Activated naive CD4-positive, alpha-beta T cell treated with anti-CD3 and anti-CD28 coated beads for 36 hours (primary cell): ENCODE measurements at regions of chr3 and their contacts with region 1.

Region 1: GRCh38 chr3:133573054-133573628 is 345 bp upstream of the CDV3 start:
- DNase-seq: peak; percentile 100
- H3K4me3 Mint-ChIP-seq: peak overlapping the region; percentile 87
- H3K27ac Mint-ChIP-seq: peak overlapping the region; percentile 100
- H3K4me1 Mint-ChIP-seq: peaks cover 43% of the 10 kb centered on the region
- H3K27me3 Mint-ChIP-seq: no peaks in the 10 kb centered on the region

Region 2: GRCh38 chr3:132543036-132543739 is 1030.0 kb before region 1 on chr3:
- CTCF ChIA-PET with region 1: no interaction called
- intact Hi-C with region 1: no loop called
- DNase-seq: no peak
- H3K4me3 Mint-ChIP-seq: no peak overlapping the region
- H3K27ac Mint-ChIP-seq: peak overlapping the region; percentile 51
- H3K4me1 Mint-ChIP-seq: peaks cover 18% of the 10 kb centered on the region
- H3K27me3 Mint-ChIP-seq: no peaks in the 10 kb centered on the region

Region 3: GRCh38 chr3:133441867-133442270 is 131.3 kb before region 1 on chr3:
- CTCF ChIA-PET with region 1: interaction called, 4 read pairs
- intact Hi-C with region 1: loop called (anchors 1 kb)
- DNase-seq: peak; percentile 47
- H3K4me3 Mint-ChIP-seq: peak overlapping the region; percentile 60
- H3K27ac Mint-ChIP-seq: peak overlapping the region; percentile 76
- H3K4me1 Mint-ChIP-seq: peaks cover 30% of the 10 kb centered on the region
- H3K27me3 Mint-ChIP-seq: no peaks in the 10 kb centered on the region

Region 4: GRCh38 chr3:133487920-133488540 is 85.1 kb before region 1 on chr3:
- CTCF ChIA-PET with region 1: interaction called, 72 read pairs
- intact Hi-C with region 1: loop called (anchors 1 kb)
- DNase-seq: peak; percentile 72
- H3K4me3 Mint-ChIP-seq: no peak overlapping the region
- H3K27ac Mint-ChIP-seq: no peak overlapping the region
- H3K4me1 Mint-ChIP-seq: peaks cover 49% of the 10 kb centered on the region
- H3K27me3 Mint-ChIP-seq: no peaks in the 10 kb centered on the region

Region 5: DNA sequence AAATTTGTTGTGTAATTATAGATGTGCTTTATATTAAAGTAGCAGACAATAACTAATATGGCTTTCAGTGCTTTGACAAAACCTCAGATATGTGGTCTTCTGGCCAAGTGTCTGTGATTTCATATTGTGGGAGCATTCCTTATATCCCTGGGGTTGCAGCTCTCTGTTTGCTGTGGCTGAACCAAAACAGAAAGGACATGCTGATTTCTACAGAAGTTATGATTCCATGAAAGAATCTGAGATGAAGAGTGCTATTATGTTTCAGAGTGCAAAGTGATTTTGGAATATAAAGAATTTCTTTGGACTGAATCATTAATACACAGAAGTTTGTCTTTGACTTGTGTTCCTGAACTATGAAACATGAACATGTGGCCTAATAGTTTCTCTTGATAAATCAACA is 36.9 kb after region 1 on chr3:
- CTCF ChIA-PET with region 1: no interaction called
- intact Hi-C with region 1: no loop called
- DNase-seq: no peak
- H3K4me3 Mint-ChIP-seq: no peak overlapping the region
- H3K27ac Mint-ChIP-seq: no peak overlapping the region
- H3K4me1 Mint-ChIP-seq: no peaks in the 10 kb centered on the region
- H3K27me3 Mint-ChIP-seq: no peaks in the 10 kb centered on the region

Region 6: GRCh38 chr3:133661454-133662277 is 88.5 kb after region 1 on chr3 and contains the start of gene TOPBP1:
- CTCF ChIA-PET with region 1: interaction called, 4 read pairs
- intact Hi-C with region 1: loop called (anchors 1 kb)
- DNase-seq: peak; percentile 94
- H3K4me3 Mint-ChIP-seq: peak within 1 kb of the TSS; percentile 98
- H3K27ac Mint-ChIP-seq: peak within 1 kb of the TSS; percentile 98
- H3K4me1 Mint-ChIP-seq: peaks cover 28% of the 10 kb centered on the region
- H3K27me3 Mint-ChIP-seq: no peaks in the 10 kb centered on the region
- total RNA-seq, gene TOPBP1: 65.4 to 65.8 TPM

Region 7: GRCh38 chr3:133776794-133777438 is 203.8 kb after region 1 on chr3:
- CTCF ChIA-PET with region 1: no interaction called
- intact Hi-C with region 1: no loop called
- DNase-seq: no peak
- H3K4me3 Mint-ChIP-seq: no peak overlapping the region
- H3K27ac Mint-ChIP-seq: no peak overlapping the region
- H3K4me1 Mint-ChIP-seq: no peaks in the 10 kb centered on the region
- H3K27me3 Mint-ChIP-seq: peaks cover 12% of the 10 kb centered on the region

Region 8: GRCh38 chr3:133944641-133945380 is 371.7 kb after region 1 on chr3:
- CTCF ChIA-PET with region 1: no interaction called
- intact Hi-C with region 1: no loop called
- DNase-seq: no peak
- H3K4me3 Mint-ChIP-seq: no peak overlapping the region
- H3K27ac Mint-ChIP-seq: no peak overlapping the region
- H3K4me1 Mint-ChIP-seq: peaks cover 14% of the 10 kb centered on the region
- H3K27me3 Mint-ChIP-seq: peaks cover 6% of the 10 kb centered on the region

Region 9: DNA sequence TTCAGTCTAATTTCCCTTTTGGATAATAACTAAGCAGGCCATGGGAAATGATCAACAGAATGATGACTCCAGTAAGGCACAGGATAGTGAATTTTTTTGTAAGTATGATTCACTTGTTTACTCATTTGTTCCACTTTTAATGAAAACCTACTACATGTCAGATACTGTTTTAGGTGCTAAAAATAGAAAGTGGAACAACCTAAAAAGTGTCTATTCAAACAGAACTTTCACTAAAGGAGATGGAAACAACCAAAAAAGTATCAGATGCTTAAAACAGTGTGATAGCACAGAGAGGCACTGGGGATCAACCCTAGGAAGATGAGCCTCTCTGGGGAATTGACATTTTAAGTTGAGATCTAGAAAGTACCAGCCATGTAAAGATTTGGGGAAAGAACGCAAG is 666.4 kb after region 1 on chr3:
- CTCF ChIA-PET with region 1: no interaction called
- intact Hi-C with region 1: loop called (anchors 5 kb)
- DNase-seq: peak; percentile 45
- H3K4me3 Mint-ChIP-seq: peak overlapping the region; percentile 30
- H3K27ac Mint-ChIP-seq: peak overlapping the region; percentile 88
- H3K4me1 Mint-ChIP-seq: peaks cover 94% of the 10 kb centered on the region
- H3K27me3 Mint-ChIP-seq: no peaks in the 10 kb centered on the region